CD8-positive, alpha-beta memory T cell (primary cell): ENCODE measurements at regions of chr3 and their contacts with region 1.

Region 1: GRCh38 chr3:141231101-141231935 is at the start of gene PXYLP1:
- DNase-seq: peak; percentile 85 to 93 (median 88)
- H3K4me3 ChIP-seq: peak within 1 kb of the TSS; percentile 90
- H3K4me3 Mint-ChIP-seq: peak within 1 kb of the TSS; percentile 86 to 98 (median 93)
- H3K27ac ChIP-seq: peak within 1 kb of the TSS; percentile 75
- H3K27ac Mint-ChIP-seq: peak within 1 kb of the TSS; percentile 88 to 98 (median 97)
- H3K4me1 ChIP-seq: peaks cover 36% of the 10 kb centered on the region
- H3K4me1 Mint-ChIP-seq: peaks cover 38 to 52% (median 49%) of the 10 kb centered on the region in 3 donors
- H3K27me3 ChIP-seq: no peaks in the 10 kb centered on the region
- H3K27me3 Mint-ChIP-seq: no peaks in the 10 kb centered on the region
- total RNA-seq, gene PXYLP1: 6.6 to 9.5 TPM

Region 2: DNA sequence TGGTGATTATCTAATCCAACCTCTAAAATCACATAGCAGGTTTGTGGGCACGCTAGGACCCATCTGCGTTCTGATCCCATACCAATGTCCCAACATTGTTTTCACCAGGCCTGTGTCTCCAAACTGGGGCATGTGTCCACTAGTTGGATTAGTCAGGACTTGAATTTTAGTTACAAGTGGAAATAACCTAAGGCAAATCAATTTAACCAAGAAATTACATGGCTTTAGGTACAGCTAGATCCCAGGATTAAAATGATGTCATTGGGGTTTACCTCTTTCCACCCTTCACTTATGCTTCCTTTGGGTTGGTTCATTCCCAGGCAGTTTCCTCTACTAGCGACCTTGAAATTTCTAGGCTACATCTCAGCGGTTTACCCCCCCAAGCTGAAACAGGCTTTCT is 46.9 kb before region 1 on chr3:
- CTCF ChIA-PET with region 1: no interaction called
- POLR2A ChIA-PET with region 1: no interaction called
- DNase-seq: no peak
- H3K4me3 ChIP-seq: no peak overlapping the region
- H3K4me3 Mint-ChIP-seq: no peak overlapping the region
- H3K27ac ChIP-seq: no peak overlapping the region
- H3K27ac Mint-ChIP-seq: no peak overlapping the region
- H3K4me1 ChIP-seq: no peaks in the 10 kb centered on the region
- H3K4me1 Mint-ChIP-seq: no peaks in the 10 kb centered on the region
- H3K27me3 ChIP-seq: no peaks in the 10 kb centered on the region
- H3K27me3 Mint-ChIP-seq: peaks cover 3 to 22% of the 10 kb centered on the region in 2 donors

Region 3: DNA sequence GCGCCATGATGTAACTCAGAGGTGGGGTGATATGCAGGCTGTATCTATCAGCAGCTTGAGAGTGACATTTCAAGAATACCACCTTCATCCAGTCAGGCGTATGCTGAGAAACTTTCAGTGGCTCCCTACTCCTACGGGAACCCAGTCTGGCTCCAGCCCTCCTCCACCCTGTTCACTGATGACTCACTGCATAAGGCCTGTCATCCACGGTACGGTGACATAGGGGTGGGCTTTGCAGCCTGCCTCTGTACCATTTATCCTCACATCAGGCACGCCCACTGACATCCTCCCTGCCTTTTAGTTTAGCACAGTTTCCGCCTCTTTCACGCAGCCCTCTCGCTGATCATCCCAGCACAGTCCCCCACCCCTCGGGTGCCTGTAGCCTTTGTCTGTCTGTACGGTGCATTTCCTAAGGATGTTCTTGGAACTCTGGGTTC is 12.0 kb after region 1 on chr3:
- CTCF ChIA-PET with region 1: interaction called, 28 read pairs
- POLR2A ChIA-PET with region 1: interaction called, 3 read pairs
- DNase-seq: peak; percentile 11 to 79 (median 49)
- H3K4me3 ChIP-seq: peak overlapping the region; percentile 33
- H3K4me3 Mint-ChIP-seq: peak overlapping the region; percentile 6 to 69 (median 57)
- H3K27ac ChIP-seq: no peak overlapping the region
- H3K27ac Mint-ChIP-seq: peak overlapping the region in 7 of 8 donors; percentile 22 to 88 (median 82)
- H3K4me1 ChIP-seq: peaks cover 31% of the 10 kb centered on the region
- H3K4me1 Mint-ChIP-seq: peaks cover 20 to 42% (median 24%) of the 10 kb centered on the region in 3 donors
- H3K27me3 ChIP-seq: no peaks in the 10 kb centered on the region
- H3K27me3 Mint-ChIP-seq: no peaks in the 10 kb centered on the region

Region 4: DNA sequence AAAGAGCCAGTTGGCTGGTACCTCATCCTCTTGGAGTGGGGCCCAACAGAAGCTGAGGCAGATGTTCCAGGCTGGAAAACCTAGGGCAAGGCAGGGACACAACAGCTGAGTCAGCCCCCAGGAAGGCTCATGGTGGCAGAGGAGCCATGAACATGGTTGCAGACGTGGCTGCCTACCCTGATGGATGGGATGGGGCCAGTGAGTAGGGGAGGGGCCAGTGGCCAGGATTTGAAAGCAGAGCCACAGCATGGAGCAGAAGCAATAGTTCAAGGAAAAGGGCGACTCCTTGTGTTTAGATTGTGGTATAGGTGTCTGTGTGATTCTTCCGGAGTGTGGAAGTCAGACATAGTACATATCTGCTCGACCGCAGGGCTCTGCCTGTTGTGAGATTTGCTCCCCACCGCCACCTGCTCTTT is 24.5 kb after region 1 on chr3:
- CTCF ChIA-PET with region 1: interaction called, 25 read pairs
- POLR2A ChIA-PET with region 1: interaction called, 6 read pairs
- DNase-seq: peak in 3 of 5 donors; percentile 20 to 67 (median 47)
- H3K4me3 ChIP-seq: no peak overlapping the region
- H3K4me3 Mint-ChIP-seq: peak overlapping the region in 2 of 7 donors; percentile 39 to 45
- H3K27ac ChIP-seq: no peak overlapping the region
- H3K27ac Mint-ChIP-seq: peak overlapping the region in 3 of 8 donors; percentile 32 to 61 (median 52)
- H3K4me1 ChIP-seq: peaks cover 14% of the 10 kb centered on the region
- H3K4me1 Mint-ChIP-seq: peaks cover 9 to 16% (median 16%) of the 10 kb centered on the region in 3 donors
- H3K27me3 ChIP-seq: no peaks in the 10 kb centered on the region
- H3K27me3 Mint-ChIP-seq: no peaks in the 10 kb centered on the region

Region 5: GRCh38 chr3:141273700-141274402 is 42.5 kb after region 1 on chr3:
- CTCF ChIA-PET with region 1: interaction called, 64 read pairs
- POLR2A ChIA-PET with region 1: interaction called, 12 read pairs
- DNase-seq: no peak
- H3K4me3 ChIP-seq: no peak overlapping the region
- H3K4me3 Mint-ChIP-seq: no peak overlapping the region
- H3K27ac ChIP-seq: no peak overlapping the region
- H3K27ac Mint-ChIP-seq: peak overlapping the region in 2 of 8 donors; percentile 32 to 75
- H3K4me1 ChIP-seq: peaks cover 18% of the 10 kb centered on the region
- H3K4me1 Mint-ChIP-seq: peaks cover 18 to 42% (median 31%) of the 10 kb centered on the region in 3 donors
- H3K27me3 ChIP-seq: no peaks in the 10 kb centered on the region
- H3K27me3 Mint-ChIP-seq: peaks cover 0 to 1% of the 10 kb centered on the region in 2 donors

Region 6: DNA sequence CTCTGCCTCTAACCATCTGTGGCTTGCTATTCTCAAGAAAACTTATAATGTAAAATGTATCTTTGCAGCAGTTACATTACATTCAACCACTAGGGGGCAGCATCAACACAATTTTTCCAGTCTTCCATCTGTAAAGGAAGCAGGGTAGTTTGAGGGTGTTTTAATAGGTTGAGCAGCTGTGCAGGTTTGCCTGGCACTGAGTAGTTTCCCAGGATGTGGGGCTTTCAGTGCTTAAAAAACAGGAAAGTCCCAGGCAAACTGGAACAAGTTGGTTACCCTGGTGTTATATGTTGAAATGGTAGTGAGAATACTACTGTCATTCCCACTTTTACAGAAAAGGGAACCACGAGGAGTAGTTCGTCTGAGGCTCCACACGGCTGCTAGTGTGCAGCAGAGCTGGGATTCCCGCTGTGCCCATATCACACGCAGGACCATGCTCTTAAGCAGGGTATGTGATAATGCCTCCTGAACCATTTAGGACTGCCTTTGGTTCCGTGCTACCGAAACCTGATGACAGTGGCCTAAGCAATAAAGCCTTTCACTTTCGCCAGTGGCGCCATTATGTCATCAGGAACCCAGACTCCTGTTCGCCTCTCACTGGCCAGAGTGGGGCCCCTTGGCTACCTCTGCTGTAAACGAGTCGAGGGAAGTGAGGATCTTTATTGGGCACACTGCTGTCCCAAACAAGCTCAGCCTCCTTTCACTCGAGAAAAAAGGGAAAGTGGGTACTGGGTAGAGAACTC is 72.3 kb after region 1 on chr3:
- CTCF ChIA-PET with region 1: interaction called, 10 read pairs
- POLR2A ChIA-PET with region 1: interaction called, 22 read pairs
- DNase-seq: peak; percentile 38 to 70 (median 66)
- H3K4me3 ChIP-seq: no peak overlapping the region
- H3K4me3 Mint-ChIP-seq: peak overlapping the region in 1 of 7 donors; percentile 10
- H3K27ac ChIP-seq: no peak overlapping the region
- H3K27ac Mint-ChIP-seq: no peak overlapping the region
- H3K4me1 ChIP-seq: peaks cover 41% of the 10 kb centered on the region
- H3K4me1 Mint-ChIP-seq: peaks cover 24 to 36% (median 34%) of the 10 kb centered on the region in 3 donors
- H3K27me3 ChIP-seq: no peaks in the 10 kb centered on the region
- H3K27me3 Mint-ChIP-seq: no peaks in the 10 kb centered on the region

Region 7: GRCh38 chr3:141913150-141913811 is 682.0 kb after region 1 on chr3:
- CTCF ChIA-PET with region 1: no interaction called
- POLR2A ChIA-PET with region 1: no interaction called
- DNase-seq: peak; percentile 14 to 61 (median 43)
- H3K4me3 ChIP-seq: no peak overlapping the region
- H3K4me3 Mint-ChIP-seq: no peak overlapping the region
- H3K27ac ChIP-seq: no peak overlapping the region
- H3K27ac Mint-ChIP-seq: peak overlapping the region in 6 of 8 donors; percentile 0 to 75 (median 38)
- H3K4me1 ChIP-seq: no peaks in the 10 kb centered on the region
- H3K4me1 Mint-ChIP-seq: peaks cover 0 to 4% (median 2%) of the 10 kb centered on the region in 3 donors
- H3K27me3 ChIP-seq: no peaks in the 10 kb centered on the region
- H3K27me3 Mint-ChIP-seq: no peaks in the 10 kb centered on the region